ENCODE measurements at regions of chr11 and their contacts with region 1.

Region 1: DNA sequence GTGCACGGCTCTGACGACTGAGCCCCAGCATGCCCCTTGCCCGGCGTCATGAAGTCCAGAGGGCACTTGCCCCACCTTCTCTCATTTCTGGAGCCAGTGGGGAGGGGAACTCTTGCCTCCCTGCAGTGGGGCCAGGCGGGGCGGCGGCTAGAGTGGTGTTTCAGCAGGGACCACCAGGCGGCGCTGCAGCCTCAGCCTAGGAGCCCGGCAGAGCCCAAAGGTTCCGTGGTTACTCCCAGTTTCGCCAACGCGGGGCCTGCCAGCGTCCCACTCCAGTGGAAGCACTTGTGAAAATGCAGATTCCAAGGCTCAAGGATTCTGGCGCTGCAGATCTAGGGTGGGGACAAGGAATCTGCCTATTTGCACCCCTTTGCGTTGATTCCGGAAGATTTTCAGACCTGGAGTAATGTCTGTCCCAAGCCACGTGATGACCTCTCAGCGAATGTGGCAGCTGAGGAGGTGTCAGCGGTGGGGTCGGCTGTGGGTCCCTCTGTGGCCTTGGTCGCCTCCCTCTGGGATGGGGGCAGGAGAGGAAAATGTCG is 55.7 kb downstream of the CD82 start:
- DNase-seq: peak; percentile 65
- ATAC-seq: peak; percentile 43
- H3K4me3 Mint-ChIP-seq: no peak overlapping the region
- H3K27ac Mint-ChIP-seq: no peak overlapping the region
- H3K4me1 Mint-ChIP-seq: peaks cover 20% of the 10 kb centered on the region
- H3K27me3 Mint-ChIP-seq: no peaks in the 10 kb centered on the region
- CTCF ChIP-seq: peak; percentile 86

Region 2: GRCh38 chr11:44551456-44552139 is 69.6 kb before region 1 on chr11:
- CTCF ChIA-PET with region 1: interaction called, 307 read pairs
- POLR2A ChIA-PET with region 1: no interaction called
- intact Hi-C with region 1: no loop called
- DNase-seq: no peak
- ATAC-seq: no peak
- H3K4me3 Mint-ChIP-seq: no peak overlapping the region
- H3K27ac Mint-ChIP-seq: no peak overlapping the region
- H3K4me1 Mint-ChIP-seq: no peaks in the 10 kb centered on the region
- H3K27me3 Mint-ChIP-seq: no peaks in the 10 kb centered on the region
- CTCF ChIP-seq: no peak

Region 3: DNA sequence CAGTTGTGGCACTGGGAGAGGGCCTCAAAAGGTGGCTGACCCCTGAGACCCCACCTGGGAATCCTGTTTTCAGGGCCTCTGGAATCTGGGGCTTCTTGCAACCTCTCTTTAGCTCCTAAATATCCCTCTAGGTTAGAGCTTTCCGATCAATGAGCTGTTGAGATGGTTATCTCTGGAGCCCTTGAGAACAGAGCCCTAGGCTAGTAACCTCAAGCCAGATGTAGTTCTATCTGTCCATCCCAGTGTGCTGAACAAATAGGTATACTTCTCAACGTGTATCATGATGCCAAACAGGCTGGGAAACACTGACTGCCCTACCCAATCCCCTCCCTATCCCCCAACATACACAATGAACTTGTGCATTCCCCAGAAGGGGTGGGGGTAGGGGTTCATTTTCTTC is 38.6 kb before region 1 on chr11:
- CTCF ChIA-PET with region 1: interaction called, 10 read pairs
- POLR2A ChIA-PET with region 1: interaction called, 3 read pairs
- intact Hi-C with region 1: no loop called
- DNase-seq: no peak
- ATAC-seq: no peak
- H3K4me3 Mint-ChIP-seq: no peak overlapping the region
- H3K27ac Mint-ChIP-seq: no peak overlapping the region
- H3K4me1 Mint-ChIP-seq: peaks cover 50% of the 10 kb centered on the region
- H3K27me3 Mint-ChIP-seq: no peaks in the 10 kb centered on the region
- CTCF ChIP-seq: no peak

Region 4: GRCh38 chr11:44604171-44604581 is 17.0 kb before region 1 on chr11:
- CTCF ChIA-PET with region 1: interaction called, 12 read pairs
- POLR2A ChIA-PET with region 1: interaction called, 3 read pairs
- intact Hi-C with region 1: no loop called
- DNase-seq: no peak
- ATAC-seq: no peak
- H3K4me3 Mint-ChIP-seq: no peak overlapping the region
- H3K27ac Mint-ChIP-seq: peak overlapping the region; percentile 77
- H3K4me1 Mint-ChIP-seq: peaks cover 90% of the 10 kb centered on the region
- H3K27me3 Mint-ChIP-seq: no peaks in the 10 kb centered on the region
- CTCF ChIP-seq: no peak

Region 5: GRCh38 chr11:44893846-44894617 is 272.8 kb after region 1 on chr11:
- CTCF ChIA-PET with region 1: interaction called, 11 read pairs
- POLR2A ChIA-PET with region 1: no interaction called
- intact Hi-C with region 1: loop called (anchors 10 kb)
- DNase-seq: peak; percentile 69
- ATAC-seq: peak; percentile 89
- H3K4me3 Mint-ChIP-seq: no peak overlapping the region
- H3K27ac Mint-ChIP-seq: no peak overlapping the region
- H3K4me1 Mint-ChIP-seq: no peaks in the 10 kb centered on the region
- H3K27me3 Mint-ChIP-seq: no peaks in the 10 kb centered on the region
- CTCF ChIP-seq: peak; percentile 84

Measured in activated CD8-positive, alpha-beta T cell treated with anti-CD3 and anti-CD28 coated beads for 36 hours (primary cell).